Adrenal gland (tissue), 19 donors: ENCODE measurements at regions of chr4 and their contacts with region 1.

Region 1: GRCh38 chr4:102620697-102621497 is 119.7 kb downstream of the NFKB1 start:
- DNase-seq: peak; percentile 41 to 77 (median 62)
- H3K4me3 ChIP-seq: no peak overlapping the region
- H3K27ac ChIP-seq: peak overlapping the region in 3 of 5 donors; percentile 34 to 69 (median 38)
- H3K4me1 ChIP-seq: no peaks in the 10 kb centered on the region
- H3K27me3 ChIP-seq: no peaks in the 10 kb centered on the region
- CTCF ChIP-seq: peak; percentile 38 to 90 (median 80)
- POLR2A ChIP-seq: peak in 1 of 2 donors; percentile 6

Region 2: GRCh38 chr4:102493794-102494193 is 127.1 kb before region 1 on chr4:
- intact Hi-C with region 1: no loop called
- DNase-seq: no peak
- H3K4me3 ChIP-seq: no peak overlapping the region
- H3K27ac ChIP-seq: no peak overlapping the region
- H3K4me1 ChIP-seq: no peaks in the 10 kb centered on the region
- H3K27me3 ChIP-seq: no peaks in the 10 kb centered on the region
- CTCF ChIP-seq: no peak
- POLR2A ChIP-seq: no peak

Region 3: DNA sequence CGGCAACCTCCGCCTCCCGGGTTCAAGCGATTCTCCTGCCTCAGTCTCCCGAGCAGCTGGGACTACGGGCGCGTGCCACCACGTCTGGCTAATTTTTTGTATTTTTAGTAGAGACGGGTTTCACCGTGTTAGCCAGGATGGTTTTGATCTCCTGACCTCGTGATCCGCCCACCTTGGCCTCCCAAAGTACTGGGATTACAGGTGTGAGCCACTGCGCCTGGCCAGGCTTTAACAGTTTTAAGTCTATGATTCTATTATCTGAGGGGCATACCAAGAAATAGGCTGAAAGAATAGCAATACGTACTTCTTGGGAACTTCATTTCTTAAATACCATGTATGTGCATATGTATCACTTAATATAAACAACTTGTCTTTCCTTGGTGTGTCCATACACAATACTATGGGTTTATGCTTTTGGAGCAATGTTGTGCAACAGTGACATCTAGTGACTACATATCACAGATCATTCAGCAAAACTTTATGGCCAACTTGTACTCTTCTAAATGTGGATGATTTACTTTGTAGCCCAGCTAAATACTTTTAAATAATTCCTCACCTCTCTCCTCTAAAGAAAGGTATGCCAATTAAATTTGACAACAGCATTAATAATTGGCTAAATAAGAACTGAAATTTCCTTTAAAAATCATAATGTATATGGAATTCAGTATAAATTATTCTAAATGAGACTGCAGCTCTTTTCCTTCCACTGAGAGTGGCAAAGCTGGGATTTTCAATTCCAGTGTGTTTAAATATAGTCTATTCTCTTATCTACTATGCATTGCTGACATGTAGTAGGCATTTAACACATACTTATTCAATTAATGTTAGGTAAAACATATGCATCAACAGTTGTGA is 388.2 kb after region 1 on chr4:
- intact Hi-C with region 1: loop called (anchors 2 to 5 kb)
- DNase-seq: peak in 3 of 7 donors; percentile 20 to 40 (median 36)
- H3K4me3 ChIP-seq: no peak overlapping the region
- H3K27ac ChIP-seq: no peak overlapping the region
- H3K4me1 ChIP-seq: peaks cover 8 to 16% of the 10 kb centered on the region in 2 donors
- H3K27me3 ChIP-seq: no peaks in the 10 kb centered on the region
- CTCF ChIP-seq: peak; percentile 23 to 87 (median 82)
- POLR2A ChIP-seq: no peak

Region 4: DNA sequence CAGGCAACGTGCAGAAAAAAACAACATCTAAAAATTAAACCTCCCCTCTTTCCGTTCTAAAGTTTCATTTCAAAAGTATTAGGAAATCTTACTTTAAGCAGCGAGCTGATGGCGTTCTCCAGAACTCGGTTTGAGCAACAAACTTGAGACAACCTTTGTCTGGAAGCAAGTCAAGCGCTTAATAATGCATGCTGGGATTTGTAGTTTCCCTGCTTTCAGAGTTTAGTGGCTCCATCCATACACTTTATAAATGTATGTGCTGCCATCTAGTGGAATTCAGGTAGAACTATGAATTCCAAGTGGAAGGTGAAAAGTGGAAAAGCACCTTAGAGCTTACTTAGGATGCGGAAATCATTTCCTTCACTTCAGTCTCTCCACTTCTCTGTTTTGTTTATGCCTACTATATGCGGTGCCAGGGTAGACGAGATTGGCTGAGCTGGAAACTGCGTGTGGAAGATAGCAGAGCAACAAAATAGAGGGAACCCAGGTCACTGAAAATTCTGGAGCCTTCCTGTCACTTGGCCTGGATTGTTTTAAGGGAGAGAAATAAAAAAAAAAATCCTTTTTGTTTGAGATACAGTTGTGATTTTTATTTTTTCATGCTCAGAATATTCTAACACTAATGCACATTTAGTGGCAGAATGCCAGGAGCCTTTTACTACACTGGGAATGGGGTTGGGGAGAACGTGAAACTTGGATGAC is 478.9 kb after region 1 on chr4 and contains the start of gene BDH2:
- intact Hi-C with region 1: loop called in 1 of 2 experiments (anchors 10 kb)
- DNase-seq: peak; percentile 59 to 85 (median 70)
- H3K4me3 ChIP-seq: peak within 1 kb of the TSS; percentile 5 to 62 (median 48)
- H3K27ac ChIP-seq: peak within 1 kb of the TSS; percentile 37 to 78 (median 67)
- H3K4me1 ChIP-seq: peaks cover 18 to 29% of the 10 kb centered on the region in 2 donors
- H3K27me3 ChIP-seq: no peaks in the 10 kb centered on the region
- CTCF ChIP-seq: peak; percentile 79 to 91 (median 84)
- POLR2A ChIP-seq: peak in 1 of 2 donors; percentile 85
- total RNA-seq, gene BDH2: 84.6 to 209 (median 115) TPM